ENCODE measurements at regions of chr19 and their contacts with region 1.

Region 1: DNA sequence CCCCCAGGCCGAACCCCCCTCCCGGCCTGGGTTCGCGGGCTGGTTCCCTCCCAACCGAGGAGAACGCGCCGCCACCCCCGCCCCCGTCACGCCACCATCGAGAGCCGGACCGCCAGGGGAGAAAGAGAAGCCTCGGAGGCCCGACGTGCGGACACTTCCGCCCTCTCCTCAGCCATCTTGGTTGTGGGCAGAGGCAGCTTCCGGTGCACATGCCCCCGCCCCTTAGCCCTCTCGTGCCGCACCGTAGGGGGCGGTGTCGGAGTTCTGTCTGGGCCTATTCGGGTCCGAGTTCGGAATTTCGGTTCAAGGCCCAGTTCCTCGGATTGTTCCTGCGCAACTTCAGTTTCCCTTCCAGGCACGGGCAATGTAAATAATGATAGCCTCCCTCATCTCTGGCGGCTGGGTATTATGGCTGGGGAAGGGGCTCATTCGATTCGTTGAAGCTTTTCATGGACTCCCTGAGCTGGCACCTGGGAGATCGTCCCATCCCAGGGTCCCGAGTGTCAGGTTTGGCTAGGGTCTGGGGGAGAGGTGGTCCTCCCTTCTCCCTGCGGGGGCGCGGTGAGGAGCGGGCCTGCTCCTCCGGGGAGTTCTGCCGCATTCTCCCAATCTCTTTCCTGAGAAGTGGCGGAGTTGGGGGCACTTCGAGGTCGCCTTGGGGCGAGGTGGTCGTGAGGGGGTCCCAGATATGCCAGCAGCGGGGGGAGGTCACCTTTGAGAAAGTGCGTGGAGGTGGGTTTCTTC is at the starts of genes IER2 and STX10:
- DNase-seq: no peak
- ATAC-seq: peak; percentile 62
- H3K4me3 ChIP-seq: peak within 1 kb of the TSS; percentile 97
- H3K27ac ChIP-seq: peak within 1 kb of the TSS; percentile 97
- H3K4me1 ChIP-seq: peaks cover 4% of the 10 kb centered on the region
- H3K27me3 ChIP-seq: no peaks in the 10 kb centered on the region
- CTCF ChIP-seq: peak; percentile 59 to 70 (median 66)
- EP300 ChIP-seq: no peak
- POLR2A ChIP-seq: peak; percentile 69
- RAD21 ChIP-seq: peak; percentile 42; the same call in 1 of the 2 replicates
- polyA plus RNA-seq, gene IER2: 2.8 to 9.3 TPM
- polyA plus RNA-seq, gene STX10: 0.56 to 3.7 TPM

Region 2: DNA sequence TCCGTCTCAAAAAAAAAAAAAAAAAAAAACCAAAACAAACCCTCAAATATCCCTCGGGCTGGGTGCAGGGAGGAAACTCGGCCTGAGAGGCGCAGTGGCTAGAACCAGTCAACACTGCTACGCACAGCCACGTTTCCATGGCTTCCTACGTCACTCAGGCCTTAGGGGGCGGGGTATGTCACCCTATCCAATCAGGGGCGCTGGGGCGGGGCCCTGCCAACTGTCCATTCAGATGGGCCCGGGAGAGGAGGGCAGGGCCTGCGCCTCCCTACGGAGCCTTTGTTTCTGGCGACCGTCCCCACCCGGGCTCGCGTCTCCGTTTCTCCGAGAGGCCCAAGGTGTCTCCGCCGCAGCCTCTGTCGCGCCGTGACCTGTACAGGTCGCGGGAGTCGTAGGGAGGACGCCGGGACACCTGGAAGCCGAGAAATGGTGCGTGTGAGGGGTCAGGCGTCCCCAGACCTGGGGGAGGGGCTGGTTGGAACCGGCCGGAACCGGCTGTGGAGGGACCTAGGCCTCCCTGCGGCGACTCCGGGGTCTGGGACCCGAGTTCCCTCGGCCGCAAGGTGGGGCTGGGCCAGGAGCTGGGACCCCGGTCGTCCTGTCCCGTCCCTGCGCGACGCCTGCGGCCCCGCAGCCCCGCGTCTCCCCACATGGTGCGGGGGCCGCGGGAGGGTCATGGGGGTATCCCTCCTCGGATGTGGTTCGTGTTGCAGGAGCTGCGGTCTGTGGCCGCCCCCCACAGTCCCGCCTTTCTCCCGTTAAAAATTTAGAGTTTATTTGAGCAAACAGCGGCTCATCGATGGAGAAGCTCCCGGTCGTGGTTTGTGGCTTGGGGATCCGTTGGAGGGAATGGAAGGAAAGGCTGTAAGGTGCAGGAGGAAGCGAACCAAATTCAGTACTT is 1552.9 kb before region 1 on chr19 and contains the start of gene ZNF627:
- CTCF ChIA-PET with region 1: no interaction called
- POLR2A ChIA-PET with region 1: no interaction called
- RAD21 ChIA-PET with region 1: no interaction called
- SMC1A ChIA-PET with region 1: no interaction called
- in situ Hi-C with region 1: loop called (anchors 25 kb)
- intact Hi-C with region 1: no loop called
- DNase-seq: peak; percentile 94
- ATAC-seq: peak; percentile 99
- H3K4me3 ChIP-seq: peak within 1 kb of the TSS; percentile 83
- H3K27ac ChIP-seq: peak within 1 kb of the TSS; percentile 99
- H3K4me1 ChIP-seq: peaks cover 14% of the 10 kb centered on the region
- H3K27me3 ChIP-seq: no peaks in the 10 kb centered on the region
- CTCF ChIP-seq: peak; percentile 10 to 30 (median 17); a peak in 3 of 6 replicates
- EP300 ChIP-seq: 0 out of 4 replicates have a peak, but pooled peaks of 1 of the 2 experiments have one; percentile 15
- POLR2A ChIP-seq: peak; percentile 99
- RAD21 ChIP-seq: no peak
- polyA plus RNA-seq, gene ZNF627: 5.1 to 5.4 TPM

Region 3: GRCh38 chr19:13051267-13052165 is 98.8 kb before region 1 on chr19:
- CTCF ChIA-PET with region 1: no interaction called
- POLR2A ChIA-PET with region 1: no interaction called
- RAD21 ChIA-PET with region 1: no interaction called
- SMC1A ChIA-PET with region 1: no interaction called
- in situ Hi-C with region 1: no loop called
- intact Hi-C with region 1: no loop called
- DNase-seq: no peak
- ATAC-seq: peak; percentile 50
- H3K4me3 ChIP-seq: no peak overlapping the region
- H3K27ac ChIP-seq: no peak overlapping the region
- H3K4me1 ChIP-seq: no peaks in the 10 kb centered on the region
- H3K27me3 ChIP-seq: peaks cover 0 to 9% of the 10 kb centered on the region in 2 experiments; a peak in 3 of 4 replicates
- CTCF ChIP-seq: no peak
- EP300 ChIP-seq: no peak
- POLR2A ChIP-seq: no peak
- RAD21 ChIP-seq: no peak

Region 4: DNA sequence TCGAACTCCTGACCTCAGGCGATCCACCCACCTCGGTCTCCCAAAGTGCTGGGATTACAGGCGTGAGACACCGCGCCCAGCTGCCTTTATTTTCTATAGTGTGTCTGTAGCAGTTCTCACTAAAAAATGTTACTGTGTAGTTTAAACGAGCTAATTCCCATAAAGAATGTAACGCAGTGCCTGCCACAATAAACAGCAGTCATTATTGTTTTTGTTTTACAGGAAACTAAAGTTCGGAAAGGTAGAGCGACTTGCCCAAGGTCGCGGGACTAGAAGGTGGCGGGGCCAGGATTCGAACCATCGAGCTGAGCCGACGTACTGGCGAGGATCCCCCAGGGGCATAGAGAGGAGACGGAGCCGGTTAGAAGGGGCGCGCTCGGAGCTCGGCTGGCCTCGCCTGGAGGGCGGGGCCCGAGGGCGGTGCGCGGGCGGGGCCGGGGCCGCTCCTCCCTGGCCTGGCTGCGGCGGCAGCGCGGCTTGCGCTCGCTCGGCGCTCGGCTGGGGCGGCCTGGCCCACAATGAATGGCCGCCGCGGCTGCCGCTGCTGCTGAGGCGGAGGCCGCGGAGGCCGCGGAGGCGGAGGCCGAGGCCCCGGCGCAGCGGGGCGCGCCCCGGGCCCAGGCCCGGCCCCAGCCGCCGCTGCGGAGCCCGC is 32.5 kb before region 1 on chr19 and contains the start of gene NACC1:
- CTCF ChIA-PET with region 1: interaction called, 7 read pairs
- POLR2A ChIA-PET with region 1: interaction called, 28 read pairs
- RAD21 ChIA-PET with region 1: interaction called, 10 read pairs
- SMC1A ChIA-PET with region 1: interaction called, 7 read pairs
- in situ Hi-C with region 1: no loop called
- intact Hi-C with region 1: loop called (anchors 2 kb)
- DNase-seq: no peak
- ATAC-seq: peak; percentile 82
- H3K4me3 ChIP-seq: peak within 1 kb of the TSS; percentile 98
- H3K27ac ChIP-seq: peak within 1 kb of the TSS; percentile 75
- H3K4me1 ChIP-seq: peaks cover 36% of the 10 kb centered on the region
- H3K27me3 ChIP-seq: no peaks in the 10 kb centered on the region
- CTCF ChIP-seq: no peak
- EP300 ChIP-seq: no peak
- POLR2A ChIP-seq: peak; percentile 66
- RAD21 ChIP-seq: 0 out of 2 replicates have a peak, but pooled peaks have one; percentile 0
- polyA plus RNA-seq, gene NACC1: 0.18 to 0.27 TPM

Region 5: GRCh38 chr19:13181747-13182388 is 31.5 kb after region 1 on chr19:
- CTCF ChIA-PET with region 1: interaction called, 7 read pairs
- POLR2A ChIA-PET with region 1: interaction called, 19 read pairs
- RAD21 ChIA-PET with region 1: interaction called, 22 read pairs
- SMC1A ChIA-PET with region 1: interaction called, 6 read pairs
- in situ Hi-C with region 1: no loop called
- intact Hi-C with region 1: no loop called
- DNase-seq: no peak
- ATAC-seq: peak; percentile 87
- H3K4me3 ChIP-seq: no peak overlapping the region
- H3K27ac ChIP-seq: peak overlapping the region; percentile 52
- H3K4me1 ChIP-seq: peaks cover 17% of the 10 kb centered on the region
- H3K27me3 ChIP-seq: no peaks in the 10 kb centered on the region
- CTCF ChIP-seq: no peak
- EP300 ChIP-seq: no peak; a peak in 1 of 4 replicates
- POLR2A ChIP-seq: no peak
- RAD21 ChIP-seq: no peak

Region 6: GRCh38 chr19:13846557-13847406 is 696.4 kb after region 1 on chr19:
- CTCF ChIA-PET with region 1: no interaction called
- POLR2A ChIA-PET with region 1: interaction called, 3 read pairs
- RAD21 ChIA-PET with region 1: interaction called, 3 read pairs
- SMC1A ChIA-PET with region 1: no interaction called
- in situ Hi-C with region 1: loop called (anchors 10 kb)
- intact Hi-C with region 1: loop called (anchors 10 kb)
- DNase-seq: peak; percentile 85
- ATAC-seq: peak; percentile 76
- H3K4me3 ChIP-seq: peak overlapping the region; percentile 64
- H3K27ac ChIP-seq: peak overlapping the region; percentile 91
- H3K4me1 ChIP-seq: peaks cover 41% of the 10 kb centered on the region
- H3K27me3 ChIP-seq: no peaks in the 10 kb centered on the region
- CTCF ChIP-seq: no peak
- EP300 ChIP-seq: peak; percentile 86 to 94
- POLR2A ChIP-seq: peak; percentile 72
- RAD21 ChIP-seq: no peak

Region 7: DNA sequence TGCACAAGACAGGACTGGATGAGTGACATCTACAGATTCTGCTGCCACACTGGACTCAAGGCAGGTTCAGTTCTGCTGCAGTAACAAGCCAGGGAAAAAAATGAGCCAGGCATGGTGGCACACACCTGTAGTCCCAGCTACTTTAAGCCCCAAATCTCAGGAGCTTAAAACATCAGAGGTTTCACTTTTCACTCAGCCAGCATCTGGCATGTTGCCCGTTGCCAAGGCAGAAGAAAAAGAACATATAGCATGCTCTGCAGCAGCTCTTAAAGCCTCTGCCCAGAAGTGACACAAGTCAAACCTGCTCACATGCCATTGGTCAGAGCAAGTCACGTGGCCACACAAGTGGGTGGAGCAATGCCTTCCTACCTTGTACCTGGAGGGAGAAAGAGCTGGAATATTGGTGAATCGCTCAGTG is 1216.1 kb after region 1 on chr19:
- CTCF ChIA-PET with region 1: no interaction called
- POLR2A ChIA-PET with region 1: no interaction called
- RAD21 ChIA-PET with region 1: no interaction called
- SMC1A ChIA-PET with region 1: no interaction called
- in situ Hi-C with region 1: loop called (anchors 10 kb)
- intact Hi-C with region 1: no loop called
- DNase-seq: peak; percentile 98
- ATAC-seq: peak; percentile 63
- H3K4me3 ChIP-seq: no peak overlapping the region
- H3K27ac ChIP-seq: peak overlapping the region; percentile 36; the same call in 1 of the 2 replicates
- H3K4me1 ChIP-seq: peaks cover 59% of the 10 kb centered on the region
- H3K27me3 ChIP-seq: no peaks in the 10 kb centered on the region
- CTCF ChIP-seq: no peak
- EP300 ChIP-seq: no peak
- POLR2A ChIP-seq: peak; percentile 48; the same call in 1 of the 2 replicates
- RAD21 ChIP-seq: no peak